ENCODE measurements at regions of chr17 and their contacts with region 1.

Region 1: DNA sequence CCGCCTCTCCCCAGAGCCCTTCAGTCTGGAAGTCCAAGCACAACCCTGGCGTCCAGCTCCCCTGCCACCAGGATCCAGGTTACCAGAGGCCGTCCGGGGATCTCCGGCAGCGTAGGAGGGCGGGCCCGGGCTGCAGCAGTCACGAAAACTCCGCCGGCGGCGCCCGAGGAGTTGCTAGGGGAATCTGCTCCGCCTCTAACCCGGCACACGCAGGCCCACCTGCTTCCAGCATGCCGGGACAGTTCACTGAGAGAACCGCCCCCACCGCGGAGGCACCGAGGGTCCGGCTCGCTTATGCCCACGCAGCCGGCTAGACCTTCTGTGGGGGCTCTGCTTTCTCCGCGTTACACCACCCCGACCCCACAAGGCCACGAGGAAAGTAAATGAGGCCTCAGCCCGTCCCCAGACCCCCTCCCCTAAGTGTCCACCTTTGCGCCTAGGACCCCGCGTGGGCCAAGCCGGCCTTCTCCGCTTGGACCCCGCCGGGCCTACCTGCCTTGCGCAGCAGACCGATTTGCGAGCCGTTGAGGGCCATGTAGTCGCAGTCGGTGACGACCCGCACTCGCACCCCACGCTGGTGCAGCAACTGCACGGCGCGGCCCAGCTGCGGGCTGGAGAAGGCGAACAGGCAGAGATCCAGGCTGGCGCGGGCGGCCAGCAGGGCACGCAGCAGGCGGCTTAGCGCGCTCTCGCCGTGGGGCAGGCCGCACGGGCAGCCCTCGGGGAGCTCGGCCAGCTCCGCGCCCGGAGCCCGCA is 587 bp downstream of the PLD6 start:
- DNase-seq: no peak
- ATAC-seq: peak; percentile 17

Region 2: GRCh38 chr17:17191346-17191792 is 14.2 kb before region 1 on chr17:
- intact Hi-C with region 1: loop called (anchors 2 kb)
- DNase-seq: no peak
- ATAC-seq: peak; percentile 73

Region 3: DNA sequence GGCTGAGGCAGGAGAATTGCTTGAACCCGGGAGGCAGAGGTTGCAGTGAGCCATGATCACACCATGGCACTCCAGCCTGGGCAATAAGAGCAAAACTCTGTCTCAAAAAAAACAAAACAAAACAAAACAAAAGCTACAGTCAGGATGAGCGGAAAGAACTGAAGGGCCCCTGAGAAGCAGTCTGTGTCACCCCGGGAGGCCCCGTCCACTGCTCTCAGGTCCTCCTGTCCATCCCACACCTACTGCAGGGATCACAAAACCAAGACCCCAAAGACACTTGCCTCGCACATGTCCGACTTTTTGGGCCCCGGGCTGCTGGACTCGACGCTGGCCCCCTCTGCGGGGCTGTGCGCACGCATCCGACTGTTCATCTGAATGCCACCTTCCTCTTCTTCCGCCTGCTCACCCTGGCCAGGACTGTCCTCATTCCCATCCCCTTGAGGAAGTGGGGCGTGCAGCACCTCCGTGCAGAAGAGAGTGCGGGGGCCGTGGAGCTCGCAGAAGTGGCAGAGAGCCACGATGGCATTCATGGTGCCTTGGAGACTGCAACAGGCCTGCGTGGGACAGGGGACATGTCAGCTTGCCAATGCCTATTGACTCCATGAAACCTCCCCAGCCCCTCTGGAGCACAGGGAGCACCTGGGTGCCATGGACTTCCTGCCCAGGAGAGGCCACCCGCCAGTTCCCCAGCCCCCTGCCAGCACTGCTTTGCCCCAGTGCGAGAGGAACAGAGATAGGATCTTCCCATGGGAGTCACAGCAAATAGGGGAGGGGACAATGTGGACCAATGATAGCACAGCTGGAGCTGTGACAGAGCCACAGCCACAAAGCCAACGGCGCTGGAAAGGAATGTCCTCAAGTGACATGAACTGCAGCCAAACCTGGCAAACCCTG is 22.3 kb after region 1 on chr17:
- intact Hi-C with region 1: loop called (anchors 2 kb)
- DNase-seq: no peak
- ATAC-seq: peak; percentile 86